ENCODE measurements at regions of chr3 and their contacts with region 1.

Region 1: GRCh38 chr3:160343132-160343531 is 55.9 kb downstream of the IFT80 start:
- DNase-seq: no peak
- H3K4me3 ChIP-seq: no peak overlapping the region
- H3K27ac ChIP-seq: no peak overlapping the region
- H3K4me1 ChIP-seq: no peaks in the 10 kb centered on the region
- H3K27me3 ChIP-seq: no peaks in the 10 kb centered on the region
- CTCF ChIP-seq: peak in 2 of 3 experiments; percentile 5 to 36

Region 2: GRCh38 chr3:160038862-160039562 is 304.1 kb before region 1 on chr3:
- intact Hi-C with region 1: loop called (anchors 10 kb)
- DNase-seq: no peak
- H3K4me3 ChIP-seq: peak overlapping the region; percentile 44 to 58
- H3K27ac ChIP-seq: no peak overlapping the region
- H3K4me1 ChIP-seq: peaks cover 3 to 6% of the 10 kb centered on the region in 2 donors
- H3K27me3 ChIP-seq: peaks cover 5% of the 10 kb centered on the region
- CTCF ChIP-seq: no peak

Region 3: DNA sequence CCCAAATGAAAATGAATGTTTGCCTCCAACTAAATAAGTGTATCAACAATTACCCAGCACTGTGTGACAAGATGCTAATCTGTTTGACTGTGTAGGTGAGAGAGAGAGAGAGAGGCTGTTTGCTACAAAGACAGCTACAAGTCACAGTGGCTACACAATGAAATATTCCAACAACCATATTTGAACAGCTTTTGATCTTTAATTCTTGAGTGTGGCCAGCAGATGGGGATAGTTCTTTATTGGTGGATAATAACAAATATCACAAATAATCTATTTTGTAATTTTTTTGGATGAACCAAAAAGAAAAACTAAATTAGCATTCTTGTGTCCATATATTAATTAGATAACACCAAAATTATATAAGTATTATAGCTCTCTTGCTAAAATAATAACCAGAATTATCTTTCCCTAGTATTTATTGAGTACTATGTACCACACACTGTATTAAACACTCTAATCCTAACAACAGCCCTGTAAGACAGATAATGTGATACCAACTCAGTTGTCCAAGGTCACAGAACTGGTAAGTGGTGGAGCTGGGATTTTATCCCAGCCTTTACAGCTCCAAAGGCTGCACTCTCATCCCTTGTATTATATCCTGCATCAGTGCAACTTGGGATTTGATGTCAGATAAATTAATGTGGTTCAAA is 179.8 kb before region 1 on chr3:
- intact Hi-C with region 1: loop called (anchors 5 kb)
- DNase-seq: no peak
- H3K4me3 ChIP-seq: no peak overlapping the region
- H3K27ac ChIP-seq: no peak overlapping the region
- H3K4me1 ChIP-seq: no peaks in the 10 kb centered on the region
- H3K27me3 ChIP-seq: no peaks in the 10 kb centered on the region
- CTCF ChIP-seq: peak in 2 of 3 experiments; percentile 7 to 43

Measured in ascending aorta (tissue), 2 donors.